Posterior vena cava (tissue), 2 donors: ENCODE measurements at regions of chr6 and their contacts with region 1.

Region 1: DNA sequence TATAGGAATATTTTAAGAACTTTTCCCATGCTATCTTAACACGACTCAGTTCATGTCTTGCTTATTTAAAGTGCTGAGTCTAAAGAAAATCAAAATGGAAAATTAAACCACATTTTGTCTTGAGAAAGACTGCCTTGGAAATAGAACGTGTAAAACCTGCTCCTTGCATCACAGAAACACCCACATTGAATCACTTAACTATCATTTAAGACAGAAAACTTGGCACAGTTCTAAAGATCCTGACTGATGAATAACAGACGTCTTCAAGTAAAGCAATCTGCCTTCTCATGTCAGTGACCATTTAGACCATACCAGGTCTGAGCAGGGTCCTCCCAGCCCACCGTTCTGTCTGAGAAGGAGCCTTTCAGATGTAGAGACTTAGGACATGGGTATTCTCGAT is 7.4 kb downstream of the PERP start:
- DNase-seq: no peak

Region 2: DNA sequence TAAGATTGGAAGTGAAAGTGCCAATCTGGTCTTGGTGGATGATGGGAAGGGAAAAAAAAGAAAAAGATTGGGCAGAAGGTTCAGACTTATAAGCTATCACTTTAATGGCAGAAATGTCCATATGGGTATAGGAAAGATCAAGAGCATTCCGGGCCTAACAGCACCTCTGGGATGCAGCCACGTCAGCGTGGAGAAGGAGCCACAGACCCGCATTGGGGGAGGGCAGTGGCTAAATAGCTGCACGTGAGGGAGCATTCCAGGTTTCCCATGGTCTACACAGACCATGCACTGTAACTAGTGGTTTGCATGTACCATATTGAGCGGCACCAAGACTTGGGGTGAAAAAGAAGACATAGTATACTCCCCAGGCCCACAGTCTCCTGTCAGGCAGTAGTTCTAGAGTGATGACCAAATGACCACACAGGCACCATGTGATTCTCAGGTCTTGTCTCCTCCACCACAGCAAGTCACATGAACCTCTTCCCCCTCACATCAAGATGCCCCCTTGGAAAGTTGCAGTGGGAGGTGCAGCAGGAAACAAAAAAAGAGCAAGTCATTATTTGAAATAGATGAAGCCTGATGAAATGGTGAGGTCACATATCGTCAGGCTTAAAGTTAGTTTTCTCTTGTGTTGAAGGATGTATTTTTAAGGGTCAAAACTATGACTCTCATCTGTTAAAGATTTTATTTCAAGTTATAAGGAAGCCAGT is 327.1 kb before region 1 on chr6:
- intact Hi-C with region 1: loop called in 1 of 2 experiments (anchors 2 kb)
- DNase-seq: no peak

Region 3: DNA sequence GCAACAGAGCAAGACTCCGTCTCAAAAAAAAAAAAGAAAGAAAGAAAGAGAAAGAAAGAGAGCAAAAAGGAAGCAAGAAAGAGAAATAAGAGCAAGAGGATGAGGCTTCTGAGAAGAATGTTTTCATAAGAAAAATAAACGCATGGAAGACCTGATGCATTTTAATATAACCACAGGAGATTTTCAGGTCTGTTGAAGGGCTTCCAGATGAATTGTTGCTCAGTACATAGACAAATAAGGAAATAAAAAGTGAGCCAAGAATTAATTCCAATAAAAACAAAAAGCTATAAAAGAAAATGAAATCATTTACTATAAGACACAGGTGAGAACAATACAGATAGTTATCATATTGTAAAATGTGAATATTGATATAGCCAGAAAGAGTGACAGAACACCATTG is 36.1 kb before region 1 on chr6:
- intact Hi-C with region 1: no loop called
- DNase-seq: no peak

Region 4: GRCh38 chr6:138161338-138162110 is 61.7 kb after region 1 on chr6 and contains the start of gene ARFGEF3:
- intact Hi-C with region 1: no loop called
- DNase-seq: peak; percentile 83
- total RNA-seq, gene ARFGEF3: 1.3 to 2.0 TPM

Region 5: GRCh38 chr6:138757136-138757535 is 657.3 kb after region 1 on chr6:
- intact Hi-C with region 1: no loop called
- DNase-seq: no peak